Naive thymus-derived CD8-positive, alpha-beta T cell (primary cell): ENCODE measurements at regions of chr4 and their contacts with region 1.

Region 1: DNA sequence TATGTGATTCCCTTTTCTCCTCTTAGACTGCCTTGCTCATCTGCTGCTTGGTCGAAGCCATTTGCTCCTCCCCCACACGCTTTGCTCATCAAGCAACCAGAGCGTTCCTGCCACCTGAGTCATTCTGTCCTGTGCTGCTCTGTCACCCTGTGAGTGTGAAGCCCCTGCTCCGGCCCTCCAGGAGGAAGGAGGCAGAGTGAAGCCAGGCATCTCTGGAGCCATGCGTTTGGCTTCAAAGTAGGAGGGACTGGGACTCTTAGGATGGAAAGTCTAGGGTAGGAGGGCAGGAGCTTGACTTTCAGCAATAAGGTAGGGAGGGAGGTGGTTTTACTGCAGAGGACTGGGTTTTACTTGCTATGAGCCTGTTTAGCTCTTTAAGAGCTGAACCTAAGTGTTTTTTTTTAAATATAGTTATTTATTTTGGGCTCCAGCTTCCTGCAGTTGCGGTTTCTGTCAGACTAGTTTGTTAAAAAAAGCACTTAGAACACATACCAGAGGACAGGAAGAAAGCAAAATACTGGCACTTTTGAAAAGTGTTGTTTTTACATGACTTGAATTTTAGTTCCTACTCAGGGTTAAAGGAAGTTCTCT is 63.6 kb downstream of the SPINK2 start:
- DNase-seq: peak; percentile 16 to 78 (median 54)
- ATAC-seq: peak; percentile 78 to 84
- H3K4me3 Mint-ChIP-seq: peak overlapping the region; percentile 72 to 93 (median 84)
- H3K27ac Mint-ChIP-seq: peak overlapping the region; percentile 65 to 98 (median 96)
- H3K4me1 Mint-ChIP-seq: peaks cover 25 to 73% (median 49%) of the 10 kb centered on the region in 4 donors
- H3K27me3 Mint-ChIP-seq: no peaks in the 10 kb centered on the region

Region 2: GRCh38 chr4:56799824-56800756 is 42.2 kb after region 1 on chr4:
- POLR2A ChIA-PET with region 1: interaction called, 18 read pairs
- DNase-seq: peak; percentile 62 to 89 (median 78)
- ATAC-seq: peak; percentile 97 to 99
- H3K4me3 Mint-ChIP-seq: peak overlapping the region; percentile 86 to 100 (median 94)
- H3K27ac Mint-ChIP-seq: peak overlapping the region; percentile 83 to 97 (median 91)
- H3K4me1 Mint-ChIP-seq: peaks cover 11 to 38% (median 27%) of the 10 kb centered on the region in 4 donors
- H3K27me3 Mint-ChIP-seq: no peaks in the 10 kb centered on the region

Region 3: GRCh38 chr4:56817840-56818491 is 60.0 kb after region 1 on chr4:
- POLR2A ChIA-PET with region 1: interaction called, 10 read pairs
- DNase-seq: peak in 6 of 10 donors; percentile 7 to 76 (median 40)
- ATAC-seq: peak; percentile 74 to 84
- H3K4me3 Mint-ChIP-seq: peak overlapping the region in 9 of 10 donors; percentile 3 to 68 (median 48)
- H3K27ac Mint-ChIP-seq: peak overlapping the region; percentile 0 to 88 (median 62)
- H3K4me1 Mint-ChIP-seq: peaks cover 17 to 45% (median 39%) of the 10 kb centered on the region in 4 donors
- H3K27me3 Mint-ChIP-seq: no peaks in the 10 kb centered on the region